ENCODE measurements at regions of chr6 and their contacts with region 1.

Region 1: GRCh38 chr6:143427109-143427817 is 23.2 kb downstream of the ADAT2 start:
- DNase-seq: peak; percentile 75
- ATAC-seq: peak; percentile 100
- H3K4me3 ChIP-seq: no peak overlapping the region
- H3K4me3 Mint-ChIP-seq: no peak overlapping the region
- H3K27ac ChIP-seq: no peak overlapping the region
- H3K27ac Mint-ChIP-seq: no peak overlapping the region
- H3K4me1 ChIP-seq: no peaks in the 10 kb centered on the region
- H3K4me1 Mint-ChIP-seq: peaks cover 2% of the 10 kb centered on the region
- H3K27me3 ChIP-seq: no peaks in the 10 kb centered on the region
- H3K27me3 Mint-ChIP-seq: no peaks in the 10 kb centered on the region
- CTCF ChIP-seq: peak; percentile 98

Region 2: GRCh38 chr6:142474531-142475289 is 952.6 kb before region 1 on chr6:
- CTCF ChIA-PET with region 1: interaction called, 118 read pairs
- POLR2A ChIA-PET with region 1: no interaction called
- intact Hi-C with region 1: no loop called
- DNase-seq: peak; percentile 48
- ATAC-seq: no peak
- H3K4me3 ChIP-seq: no peak overlapping the region
- H3K4me3 Mint-ChIP-seq: no peak overlapping the region
- H3K27ac ChIP-seq: no peak overlapping the region
- H3K27ac Mint-ChIP-seq: no peak overlapping the region
- H3K4me1 ChIP-seq: no peaks in the 10 kb centered on the region
- H3K4me1 Mint-ChIP-seq: no peaks in the 10 kb centered on the region
- H3K27me3 ChIP-seq: peaks cover 0 to 3% (median 0%) of the 10 kb centered on the region in 4 experiments
- H3K27me3 Mint-ChIP-seq: peaks cover 7% of the 10 kb centered on the region
- CTCF ChIP-seq: peak; percentile 96

Region 3: GRCh38 chr6:142566628-142567396 is 860.5 kb before region 1 on chr6:
- CTCF ChIA-PET with region 1: interaction called, 65 read pairs
- POLR2A ChIA-PET with region 1: no interaction called
- intact Hi-C with region 1: no loop called
- DNase-seq: peak; percentile 51
- ATAC-seq: peak; percentile 49
- H3K4me3 ChIP-seq: no peak overlapping the region
- H3K4me3 Mint-ChIP-seq: no peak overlapping the region
- H3K27ac ChIP-seq: no peak overlapping the region
- H3K27ac Mint-ChIP-seq: no peak overlapping the region
- H3K4me1 ChIP-seq: no peaks in the 10 kb centered on the region
- H3K4me1 Mint-ChIP-seq: no peaks in the 10 kb centered on the region
- H3K27me3 ChIP-seq: no peaks in the 10 kb centered on the region
- H3K27me3 Mint-ChIP-seq: peaks cover 9% of the 10 kb centered on the region
- CTCF ChIP-seq: peak; percentile 84

Region 4: GRCh38 chr6:143146186-143146851 is 280.9 kb before region 1 on chr6:
- CTCF ChIA-PET with region 1: no interaction called
- POLR2A ChIA-PET with region 1: no interaction called
- intact Hi-C with region 1: no loop called
- DNase-seq: no peak
- ATAC-seq: no peak
- H3K4me3 ChIP-seq: no peak overlapping the region
- H3K4me3 Mint-ChIP-seq: no peak overlapping the region
- H3K27ac ChIP-seq: no peak overlapping the region
- H3K27ac Mint-ChIP-seq: no peak overlapping the region
- H3K4me1 ChIP-seq: no peaks in the 10 kb centered on the region
- H3K4me1 Mint-ChIP-seq: no peaks in the 10 kb centered on the region
- H3K27me3 ChIP-seq: no peaks in the 10 kb centered on the region
- H3K27me3 Mint-ChIP-seq: no peaks in the 10 kb centered on the region
- CTCF ChIP-seq: no peak

Region 5: DNA sequence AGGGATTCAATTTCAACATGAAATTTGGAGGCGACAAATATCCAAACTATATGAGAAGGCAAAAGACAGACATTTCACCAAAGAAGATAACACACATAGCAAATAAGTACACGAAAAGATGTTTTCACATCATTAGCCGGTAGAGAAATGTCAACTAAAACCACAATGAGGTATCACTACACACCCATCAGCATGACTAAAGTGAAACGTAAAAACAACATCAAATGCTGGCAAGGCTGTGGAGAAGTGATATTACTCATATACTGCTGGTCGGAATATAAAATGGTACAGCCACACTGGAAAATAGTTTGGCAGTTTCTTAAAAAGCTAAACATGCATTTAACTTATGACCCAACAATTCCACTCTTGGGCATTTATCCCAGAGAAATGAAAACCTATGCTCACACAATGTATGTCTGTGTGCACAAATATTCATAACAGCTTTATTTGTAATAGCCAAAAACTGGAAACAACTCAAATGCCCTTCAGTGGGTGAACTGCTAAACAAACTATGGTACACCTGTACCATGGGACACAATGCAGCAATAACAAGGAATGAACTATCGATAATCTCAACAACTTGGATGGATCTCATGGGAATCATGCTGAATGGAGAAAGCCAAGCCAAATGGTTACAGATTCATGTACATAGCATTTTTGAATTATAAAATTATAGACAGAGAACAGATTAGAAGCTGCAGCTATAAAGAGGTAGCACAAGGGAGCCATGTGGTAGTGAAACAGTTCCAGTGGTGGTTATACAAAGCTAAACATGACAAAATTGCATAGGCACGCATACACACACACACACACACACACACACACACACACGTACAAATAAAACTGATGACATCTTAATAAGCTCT is 14.7 kb after region 1 on chr6:
- CTCF ChIA-PET with region 1: interaction called, 14 read pairs
- POLR2A ChIA-PET with region 1: no interaction called
- intact Hi-C with region 1: no loop called
- DNase-seq: no peak
- ATAC-seq: no peak
- H3K4me3 ChIP-seq: no peak overlapping the region
- H3K4me3 Mint-ChIP-seq: no peak overlapping the region
- H3K27ac ChIP-seq: no peak overlapping the region
- H3K27ac Mint-ChIP-seq: no peak overlapping the region
- H3K4me1 ChIP-seq: no peaks in the 10 kb centered on the region
- H3K4me1 Mint-ChIP-seq: no peaks in the 10 kb centered on the region
- H3K27me3 ChIP-seq: no peaks in the 10 kb centered on the region
- H3K27me3 Mint-ChIP-seq: no peaks in the 10 kb centered on the region
- CTCF ChIP-seq: no peak

Measured in B cell (primary cell).